T-cell (primary cell): ENCODE measurements at regions of chr10 and their contacts with region 1.

Region 1: GRCh38 chr10:30027057-30028005 is 32.1 kb downstream of the JCAD start:
- DNase-seq: peak; percentile 70 to 94 (median 90)
- ATAC-seq: peak; percentile 97 to 100 (median 99)
- H3K4me3 ChIP-seq: peak overlapping the region; percentile 26 to 39
- H3K4me3 Mint-ChIP-seq: peak overlapping the region; percentile 42 to 76 (median 67)
- H3K27ac ChIP-seq: peak overlapping the region; percentile 40
- H3K27ac Mint-ChIP-seq: peak overlapping the region in 1 of 2 donors; percentile 62
- H3K4me1 ChIP-seq: peaks cover 22 to 45% of the 10 kb centered on the region in 2 experiments
- H3K4me1 Mint-ChIP-seq: peaks cover 39 to 47% (median 41%) of the 10 kb centered on the region in 3 donors
- H3K27me3 ChIP-seq: peaks cover 0 to 73% of the 10 kb centered on the region in 2 experiments
- H3K27me3 Mint-ChIP-seq: peaks cover 46 to 67% of the 10 kb centered on the region in 2 donors

Region 2: DNA sequence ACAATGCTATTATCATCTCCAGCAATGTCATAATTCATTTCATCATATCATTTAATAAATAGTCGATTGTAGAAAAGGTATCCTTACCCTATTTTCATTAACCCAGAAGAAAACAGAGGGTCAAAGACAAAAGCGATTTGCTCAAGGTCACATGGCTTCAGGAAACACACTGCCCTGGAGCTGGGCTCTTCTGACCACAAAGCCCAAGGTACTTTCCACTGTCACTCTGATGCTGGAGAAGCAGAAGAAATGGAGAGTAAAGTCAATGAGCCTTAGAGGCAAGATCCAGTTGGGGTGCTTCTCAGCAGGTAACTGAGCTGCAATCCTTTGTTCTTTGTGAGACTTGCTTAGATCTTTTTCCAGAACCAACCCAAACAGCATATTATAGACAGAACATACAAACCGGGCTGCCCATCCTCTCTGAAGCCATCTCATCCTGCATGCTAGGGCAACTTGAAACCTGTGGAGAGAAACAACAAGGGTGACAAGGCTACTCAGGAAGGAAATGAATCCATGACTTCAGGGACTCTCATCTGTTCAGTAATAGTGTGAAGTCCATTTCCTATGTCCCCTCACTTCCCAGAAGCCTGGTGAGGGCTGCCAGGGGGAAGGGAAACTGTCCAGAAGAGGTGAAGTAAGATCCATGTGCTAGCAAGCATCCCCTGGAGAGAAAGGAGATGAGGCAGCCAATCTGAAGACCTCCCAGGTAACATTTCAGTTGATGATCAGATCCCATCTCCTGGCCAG is 244.0 kb before region 1 on chr10:
- CTCF ChIA-PET with region 1: no interaction called
- POLR2A ChIA-PET with region 1: no interaction called
- DNase-seq: no peak
- ATAC-seq: no peak
- H3K4me3 ChIP-seq: no peak overlapping the region
- H3K4me3 Mint-ChIP-seq: no peak overlapping the region
- H3K27ac ChIP-seq: no peak overlapping the region
- H3K27ac Mint-ChIP-seq: no peak overlapping the region
- H3K4me1 ChIP-seq: no peaks in the 10 kb centered on the region
- H3K4me1 Mint-ChIP-seq: no peaks in the 10 kb centered on the region
- H3K27me3 ChIP-seq: peaks cover 0 to 14% of the 10 kb centered on the region in 2 experiments
- H3K27me3 Mint-ChIP-seq: peaks cover 20 to 31% of the 10 kb centered on the region in 2 donors

Region 3: GRCh38 chr10:29881336-29881771 is 146.0 kb before region 1 on chr10:
- CTCF ChIA-PET with region 1: no interaction called
- POLR2A ChIA-PET with region 1: no interaction called
- DNase-seq: no peak
- ATAC-seq: no peak
- H3K4me3 ChIP-seq: no peak overlapping the region
- H3K4me3 Mint-ChIP-seq: no peak overlapping the region
- H3K27ac ChIP-seq: no peak overlapping the region
- H3K27ac Mint-ChIP-seq: no peak overlapping the region
- H3K4me1 ChIP-seq: no peaks in the 10 kb centered on the region
- H3K4me1 Mint-ChIP-seq: no peaks in the 10 kb centered on the region
- H3K27me3 ChIP-seq: peaks cover 0 to 25% of the 10 kb centered on the region in 2 experiments
- H3K27me3 Mint-ChIP-seq: peaks cover 20 to 37% of the 10 kb centered on the region in 2 donors

Region 4: DNA sequence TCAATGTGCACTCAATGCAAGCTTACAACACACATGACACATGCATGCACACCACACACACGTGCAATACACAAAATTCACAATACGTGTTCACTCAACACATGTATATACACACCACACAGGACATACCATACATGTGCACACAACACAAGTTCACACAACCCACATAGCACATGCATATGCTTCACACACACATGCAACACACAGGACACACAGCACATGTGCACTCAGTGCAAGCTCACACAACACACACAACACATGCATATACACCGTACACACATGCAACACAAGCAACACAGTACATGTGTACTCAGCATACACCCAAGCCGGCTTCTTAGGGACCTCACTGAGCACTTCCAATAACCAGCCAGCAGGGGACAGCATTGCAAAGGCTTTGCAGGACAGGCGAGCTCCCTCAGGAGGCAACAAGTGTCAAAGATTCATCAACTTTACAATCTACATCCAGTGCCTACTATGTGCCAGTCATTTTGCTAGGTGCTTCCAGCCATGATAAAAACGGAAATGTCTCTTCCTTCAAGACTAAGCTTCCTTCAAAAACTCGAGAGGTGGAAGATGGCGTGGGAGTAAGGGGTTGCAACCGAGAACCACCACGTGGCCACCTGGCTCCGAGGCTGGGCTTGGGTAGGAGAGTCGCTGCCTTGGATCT is 29.1 kb before region 1 on chr10:
- CTCF ChIA-PET with region 1: interaction called, 4 to 12 read pairs
- POLR2A ChIA-PET with region 1: no interaction called
- DNase-seq: peak; percentile 43 to 88 (median 69)
- ATAC-seq: peak; percentile 64 to 84 (median 80)
- H3K4me3 ChIP-seq: no peak overlapping the region
- H3K4me3 Mint-ChIP-seq: no peak overlapping the region
- H3K27ac ChIP-seq: no peak overlapping the region
- H3K27ac Mint-ChIP-seq: no peak overlapping the region
- H3K4me1 ChIP-seq: peaks cover 0 to 7% of the 10 kb centered on the region in 2 experiments
- H3K4me1 Mint-ChIP-seq: peaks cover 7 to 13% (median 12%) of the 10 kb centered on the region in 3 donors
- H3K27me3 ChIP-seq: peaks cover 0 to 47% of the 10 kb centered on the region in 2 experiments
- H3K27me3 Mint-ChIP-seq: peaks cover 48 to 63% of the 10 kb centered on the region in 2 donors

Region 5: GRCh38 chr10:30368065-30368718 is 340.9 kb after region 1 on chr10:
- CTCF ChIA-PET with region 1: interaction called in 1 of 2 experiments, 10 read pairs
- POLR2A ChIA-PET with region 1: no interaction called
- DNase-seq: no peak
- ATAC-seq: no peak
- H3K4me3 ChIP-seq: no peak overlapping the region
- H3K4me3 Mint-ChIP-seq: no peak overlapping the region
- H3K27ac ChIP-seq: no peak overlapping the region
- H3K27ac Mint-ChIP-seq: no peak overlapping the region
- H3K4me1 ChIP-seq: peaks cover 6% of the 10 kb centered on the region in 2 experiments
- H3K4me1 Mint-ChIP-seq: peaks cover 7 to 24% (median 19%) of the 10 kb centered on the region in 3 donors
- H3K27me3 ChIP-seq: peaks cover 0 to 4% of the 10 kb centered on the region in 2 experiments
- H3K27me3 Mint-ChIP-seq: peaks cover 0 to 2% of the 10 kb centered on the region in 2 donors